Activated T-helper 1 cell treated with anti-CD3 and anti-CD28 coated beads, Interleukin-12 subunit alpha, Interleukin-12 subunit beta, Interleukin-2, Interleukin-4 antibody, amounts not matched to agents 30 ng/mL and 10 ng/mL and 1 ng/mL, durations not matched to agents 14 hours and 24 hours and 36 hours (primary cell): ENCODE measurements at regions of chr12 and their contacts with region 1.

Region 1: DNA sequence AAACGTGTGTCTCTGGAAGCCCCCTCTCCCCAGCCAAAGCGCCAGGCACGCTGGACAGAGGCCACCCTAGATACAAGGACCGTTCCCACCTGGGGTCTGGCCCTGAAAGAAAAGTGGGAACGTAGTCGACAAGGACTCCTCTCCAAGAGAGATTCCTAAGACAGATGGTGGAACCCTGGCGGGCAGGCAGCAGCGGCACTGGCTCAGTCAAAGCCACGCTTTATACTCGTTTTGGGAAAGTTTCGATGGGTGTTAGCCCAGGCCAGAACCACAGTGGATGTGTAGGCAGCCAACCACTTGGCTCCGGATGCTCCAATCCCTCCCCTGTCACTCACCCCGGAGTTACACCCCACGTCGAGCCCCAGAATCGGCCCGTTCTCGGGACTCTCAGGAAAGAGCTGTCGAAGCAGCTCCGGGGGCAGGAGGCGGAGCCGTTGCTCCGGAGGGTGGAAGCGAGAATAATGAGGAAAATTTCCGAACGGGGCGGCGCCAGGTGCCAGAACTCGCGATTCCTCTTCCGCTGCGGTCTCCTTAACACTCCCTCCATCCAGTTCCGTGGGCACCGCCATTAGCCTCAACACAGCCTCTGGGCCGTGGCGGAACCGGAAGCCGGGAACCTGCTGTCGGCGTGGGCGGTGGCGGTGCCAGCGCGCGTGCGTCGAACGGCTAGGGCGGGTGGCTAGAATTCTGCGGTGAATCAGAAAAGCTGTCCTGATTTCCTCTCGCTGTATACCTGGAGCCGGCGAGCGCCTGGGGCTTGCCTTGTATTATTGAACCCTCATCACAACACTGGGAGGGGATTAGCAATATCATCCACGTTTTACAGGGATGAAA is at the start of gene BCDIN3D:
- DNase-seq: peak; percentile 91
- H3K4me3 Mint-ChIP-seq: peak within 1 kb of the TSS; percentile 91
- H3K27ac Mint-ChIP-seq: peak within 1 kb of the TSS; percentile 84
- H3K4me1 Mint-ChIP-seq: peaks cover 29% of the 10 kb centered on the region
- H3K27me3 Mint-ChIP-seq: peaks cover 1% of the 10 kb centered on the region
- total RNA-seq, gene BCDIN3D: 3.6 and 4.0 TPM in 2 replicates

Region 2: DNA sequence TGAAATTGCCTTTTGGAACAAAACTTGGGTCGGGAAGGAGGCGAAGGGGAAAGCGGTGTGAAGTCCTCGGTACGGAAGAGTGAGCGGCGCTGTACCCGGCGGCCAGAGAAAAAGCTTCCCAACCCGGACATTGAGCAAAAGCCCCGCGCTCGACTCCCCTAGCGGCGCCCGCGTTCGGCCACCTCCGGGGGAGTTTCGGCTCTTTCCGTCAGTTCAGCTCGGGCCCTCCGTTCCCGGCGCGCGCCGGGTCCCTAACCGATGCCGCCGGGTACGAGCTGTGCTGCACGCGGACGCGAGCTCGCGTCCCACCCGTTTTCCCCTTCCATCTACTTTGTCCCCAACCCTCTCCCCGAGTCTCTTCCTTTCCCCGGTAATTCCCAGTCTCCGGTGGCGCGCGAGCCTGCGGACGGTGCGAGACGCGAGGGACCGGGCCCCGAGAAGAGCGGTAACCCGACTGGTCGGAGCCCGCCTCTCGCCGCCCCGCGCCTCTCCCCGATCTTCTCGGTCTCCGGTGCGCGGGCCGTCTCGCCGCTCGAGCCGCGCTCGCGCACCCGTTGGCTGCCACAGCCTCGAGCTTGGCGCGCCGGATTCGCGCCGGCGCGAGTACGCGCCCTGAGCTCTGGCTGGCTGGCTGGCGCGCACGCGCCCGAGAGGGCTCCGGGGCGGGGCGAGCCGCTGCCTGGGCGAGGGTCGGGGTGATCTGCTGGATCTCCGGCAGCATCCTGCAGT is 475.9 kb before region 1 on chr12:
- intact Hi-C with region 1: loop called (anchors 2 kb)
- DNase-seq: peak; percentile 89
- H3K4me3 Mint-ChIP-seq: peak overlapping the region; percentile 87
- H3K27ac Mint-ChIP-seq: peak overlapping the region; percentile 94
- H3K4me1 Mint-ChIP-seq: peaks cover 48% of the 10 kb centered on the region
- H3K27me3 Mint-ChIP-seq: no peaks in the 10 kb centered on the region

Region 3: GRCh38 chr12:49567611-49568441 is 274.9 kb before region 1 on chr12 and contains the start of gene MCRS1:
- intact Hi-C with region 1: loop called (anchors 5 kb)
- DNase-seq: peak; percentile 85
- H3K4me3 Mint-ChIP-seq: peak within 1 kb of the TSS; percentile 95
- H3K27ac Mint-ChIP-seq: peak within 1 kb of the TSS; percentile 96
- H3K4me1 Mint-ChIP-seq: peaks cover 57% of the 10 kb centered on the region
- H3K27me3 Mint-ChIP-seq: no peaks in the 10 kb centered on the region
- total RNA-seq, gene MCRS1: 77.1 and 77.9 TPM in 2 replicates

Region 4: DNA sequence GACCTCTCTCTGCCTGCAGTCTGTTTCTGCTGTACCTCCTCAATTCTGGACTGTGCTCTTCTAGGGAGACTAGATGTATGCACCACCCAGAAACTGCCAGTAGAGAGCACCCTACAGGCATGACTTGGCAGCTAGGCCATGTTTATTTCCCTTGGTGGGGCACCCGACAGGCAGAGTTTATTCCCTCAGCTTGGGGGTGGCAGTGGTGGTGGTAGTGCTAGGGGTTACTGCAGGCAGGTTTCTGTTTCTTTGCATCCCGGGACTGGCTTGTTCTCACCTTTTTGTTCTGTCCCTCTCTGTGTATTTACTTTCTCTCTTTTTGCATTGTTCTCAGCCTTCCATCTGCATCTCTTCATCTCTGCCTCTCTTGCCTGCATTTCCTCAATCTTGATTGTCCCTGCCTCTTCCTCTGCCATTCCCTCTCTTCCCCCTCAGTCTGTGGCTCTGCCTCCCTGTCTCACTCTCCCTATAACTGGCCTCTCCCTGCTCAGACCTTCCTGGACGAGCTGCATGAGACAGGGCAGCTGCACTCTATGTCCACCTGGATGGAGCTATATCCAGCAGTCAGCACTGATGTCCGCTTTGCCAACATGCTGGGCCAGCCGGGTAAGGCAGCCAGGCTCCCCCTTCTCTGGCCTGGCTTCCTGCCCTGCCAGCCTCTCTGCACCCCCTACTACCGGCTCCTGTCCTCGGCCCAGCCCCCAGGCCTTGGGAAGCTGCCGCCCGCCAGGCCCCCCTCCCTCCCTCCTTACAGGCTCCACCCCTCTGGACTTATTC is 205.6 kb before region 1 on chr12:
- intact Hi-C with region 1: loop called (anchors 5 kb)
- DNase-seq: peak; percentile 54
- H3K4me3 Mint-ChIP-seq: no peak overlapping the region
- H3K27ac Mint-ChIP-seq: peak overlapping the region; percentile 24
- H3K4me1 Mint-ChIP-seq: peaks cover 11% of the 10 kb centered on the region
- H3K27me3 Mint-ChIP-seq: no peaks in the 10 kb centered on the region

Region 5: GRCh38 chr12:49763006-49763591 is 79.6 kb before region 1 on chr12:
- intact Hi-C with region 1: loop called (anchors 1 kb)
- DNase-seq: peak; percentile 61
- H3K4me3 Mint-ChIP-seq: peak overlapping the region; percentile 61
- H3K27ac Mint-ChIP-seq: peak overlapping the region; percentile 75
- H3K4me1 Mint-ChIP-seq: peaks cover 49% of the 10 kb centered on the region
- H3K27me3 Mint-ChIP-seq: peaks cover 3% of the 10 kb centered on the region

Region 6: DNA sequence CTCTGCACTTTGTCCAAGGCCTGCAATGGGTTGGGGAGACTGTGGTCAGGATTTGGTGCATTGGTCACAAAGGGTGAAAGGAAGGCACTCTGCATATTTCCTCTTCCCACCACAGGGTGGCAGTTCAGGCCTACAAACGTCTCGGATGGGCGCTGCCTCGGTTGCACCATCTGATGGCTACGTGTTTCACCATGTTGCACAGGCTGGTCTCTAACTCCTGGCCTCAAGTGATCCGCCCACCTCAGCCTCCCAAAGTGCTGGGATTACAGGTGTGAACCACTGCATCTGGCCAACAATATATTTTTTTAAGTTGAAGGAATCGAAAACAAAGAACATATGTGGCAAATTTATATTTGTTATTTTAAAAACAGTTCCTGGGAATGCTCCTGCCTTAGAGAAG is 66.3 kb before region 1 on chr12:
- intact Hi-C with region 1: loop called (anchors 1 kb)
- DNase-seq: peak; percentile 37
- H3K4me3 Mint-ChIP-seq: no peak overlapping the region
- H3K27ac Mint-ChIP-seq: no peak overlapping the region
- H3K4me1 Mint-ChIP-seq: peaks cover 19% of the 10 kb centered on the region
- H3K27me3 Mint-ChIP-seq: peaks cover 18% of the 10 kb centered on the region

Region 7: GRCh38 chr12:49828133-49829091 is 14.3 kb before region 1 on chr12 and contains the start of gene NCKAP5L:
- intact Hi-C with region 1: loop called (anchors 1 kb)
- DNase-seq: peak; percentile 86
- H3K4me3 Mint-ChIP-seq: peak within 1 kb of the TSS; percentile 96
- H3K27ac Mint-ChIP-seq: peak within 1 kb of the TSS; percentile 91
- H3K4me1 Mint-ChIP-seq: peaks cover 28% of the 10 kb centered on the region
- H3K27me3 Mint-ChIP-seq: peaks cover 24% of the 10 kb centered on the region
- total RNA-seq, gene NCKAP5L: 3.8 TPM in 2 replicates

Region 8: GRCh38 chr12:49888461-49889151 is 45.9 kb after region 1 on chr12:
- intact Hi-C with region 1: no loop called
- DNase-seq: no peak
- H3K4me3 Mint-ChIP-seq: no peak overlapping the region
- H3K27ac Mint-ChIP-seq: no peak overlapping the region
- H3K4me1 Mint-ChIP-seq: no peaks in the 10 kb centered on the region
- H3K27me3 Mint-ChIP-seq: peaks cover 13% of the 10 kb centered on the region